H1 (cell line): ENCODE measurements at regions of chr11 and their contacts with region 1.

Region 1: GRCh38 chr11:2400069-2400760 is at the start of gene TSSC4:
- DNase-seq: peak; percentile 100
- H3K4me3 ChIP-seq: peak within 1 kb of the TSS; percentile 86 to 98 (median 97)
- H3K27ac ChIP-seq: peak within 1 kb of the TSS; percentile 78
- H3K4me1 ChIP-seq: peaks cover 0 to 17% (median 6%) of the 10 kb centered on the region in 4 experiments; a peak in 5 of 7 replicates
- H3K27me3 ChIP-seq: no peaks in the 10 kb centered on the region
- CTCF ChIP-seq: peak in 2 of 3 experiments; percentile 92 to 100; a peak in 3 of 4 replicates
- EP300 ChIP-seq: no peak
- POLR2A ChIP-seq: peak in 1 of 2 experiments; percentile 61; a peak in 1 of 3 replicates
- RAD21 ChIP-seq: peak; percentile 74 to 76
- total RNA-seq, gene TSSC4: 39.3 and 44.3 TPM in 2 replicates

Region 2: GRCh38 chr11:2382936-2383851 is 17.0 kb before region 1 on chr11:
- CTCF ChIA-PET with region 1: interaction called, 43 read pairs
- POLR2A ChIA-PET with region 1: interaction called, 42 read pairs
- DNase-seq: no peak
- H3K4me3 ChIP-seq: no peak overlapping the region
- H3K27ac ChIP-seq: no peak overlapping the region
- H3K4me1 ChIP-seq: peaks cover 0 to 14% (median 4%) of the 10 kb centered on the region in 4 experiments; a peak in 5 of 7 replicates
- H3K27me3 ChIP-seq: no peaks in the 10 kb centered on the region
- CTCF ChIP-seq: no peak
- EP300 ChIP-seq: no peak
- POLR2A ChIP-seq: no peak
- RAD21 ChIP-seq: 0 out of 4 replicates have a peak, but pooled peaks of 1 of the 2 experiments have one; percentile 3